ENCODE measurements at regions of chr7 and their contacts with region 1.

Region 1: GRCh38 chr7:14717816-14718215 is 184.7 kb downstream of the DGKB start:
- DNase-seq: no peak
- H3K4me3 ChIP-seq: no peak overlapping the region
- H3K27ac ChIP-seq: no peak overlapping the region
- H3K4me1 ChIP-seq: no peaks in the 10 kb centered on the region
- H3K27me3 ChIP-seq: no peaks in the 10 kb centered on the region
- CTCF ChIP-seq: peak in 4 of 11 experiments; percentile 20 to 46 (median 44)
- POLR2A ChIP-seq: no peak

Region 2: DNA sequence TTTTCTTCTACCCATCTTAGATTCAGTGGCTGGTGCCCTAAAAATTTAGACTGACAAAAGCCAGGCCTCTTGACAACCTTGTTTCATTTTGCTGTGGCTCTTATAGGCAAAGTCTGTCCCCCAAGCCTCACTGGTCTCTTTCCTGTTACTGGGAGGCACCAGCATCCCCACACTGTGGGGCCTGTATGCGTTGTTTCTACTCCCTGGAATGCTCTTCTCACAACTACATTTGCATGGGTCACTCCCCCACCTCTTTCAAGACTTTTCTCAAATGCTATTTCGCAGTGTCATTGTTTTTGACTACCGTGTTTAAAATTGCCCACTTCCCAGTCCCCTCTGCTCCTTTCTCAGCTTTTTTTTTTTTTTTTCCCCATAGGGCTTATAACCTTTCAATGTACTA is 293.5 kb after region 1 on chr7:
- intact Hi-C with region 1: loop called (anchors 5 kb)
- DNase-seq: no peak
- H3K4me3 ChIP-seq: no peak overlapping the region
- H3K27ac ChIP-seq: no peak overlapping the region
- H3K4me1 ChIP-seq: no peaks in the 10 kb centered on the region
- H3K27me3 ChIP-seq: no peaks in the 10 kb centered on the region
- CTCF ChIP-seq: no peak
- POLR2A ChIP-seq: no peak

Measured in spleen (tissue), 13 donors.